ENCODE measurements at regions of chr6 and their contacts with region 1.

Region 1: DNA sequence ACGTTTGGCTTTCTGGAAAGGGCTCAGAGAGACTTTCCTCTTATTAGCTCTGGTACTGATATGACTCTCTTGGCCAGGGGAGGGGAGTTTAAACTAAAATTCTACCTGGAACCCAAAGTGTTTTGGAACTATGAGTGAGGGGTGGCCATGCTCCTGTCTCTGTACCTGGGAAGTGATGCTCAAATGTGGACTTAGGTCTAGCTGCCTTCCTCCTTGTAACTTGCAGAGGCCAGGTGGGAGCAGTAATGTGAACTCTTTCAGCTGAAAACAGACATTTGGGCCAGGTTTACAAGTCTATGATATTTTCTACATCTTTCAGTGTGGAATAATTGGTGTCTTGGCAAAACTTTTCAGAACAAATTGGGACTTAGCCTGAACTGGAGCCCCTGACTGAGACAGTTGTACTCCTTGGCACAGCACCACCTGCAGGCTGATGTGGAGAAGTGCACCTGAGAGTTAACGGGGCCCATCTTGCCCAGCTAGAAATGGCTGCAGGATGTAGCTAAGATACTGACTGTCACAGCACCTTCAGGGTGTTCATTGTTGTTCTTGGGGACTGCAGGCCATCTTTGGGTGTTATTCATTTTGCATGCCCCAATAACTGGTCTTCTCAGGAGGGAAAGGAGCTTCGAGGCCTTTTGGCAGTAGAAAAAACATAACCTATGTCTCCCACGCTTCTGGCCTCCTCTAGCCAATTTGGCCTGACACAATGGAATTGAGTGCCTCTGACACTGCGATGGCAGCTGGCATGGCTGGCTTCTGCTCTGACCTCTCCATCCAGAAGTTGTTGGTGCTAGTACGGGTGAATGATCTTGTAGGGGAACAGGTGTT is 37.1 kb downstream of the CD109 start:
- DNase-seq: peak; percentile 58 to 79 (median 73)
- H3K4me3 ChIP-seq: no peak overlapping the region
- H3K4me3 Mint-ChIP-seq: no peak overlapping the region
- H3K27ac ChIP-seq: peak overlapping the region in 1 of 2 donors; percentile 5
- H3K27ac Mint-ChIP-seq: peak overlapping the region in 1 of 7 donors; percentile 7
- H3K4me1 ChIP-seq: no peaks in the 10 kb centered on the region
- H3K4me1 Mint-ChIP-seq: peaks cover 4% of the 10 kb centered on the region
- H3K27me3 ChIP-seq: no peaks in the 10 kb centered on the region
- H3K27me3 Mint-ChIP-seq: no peaks in the 10 kb centered on the region
- CTCF ChIP-seq: peak; percentile 93

Region 2: GRCh38 chr6:73675466-73676098 is 57.5 kb before region 1 on chr6:
- intact Hi-C with region 1: loop called (anchors 5 kb)
- DNase-seq: peak; percentile 73 to 87 (median 80)
- H3K4me3 ChIP-seq: no peak overlapping the region
- H3K4me3 Mint-ChIP-seq: no peak overlapping the region
- H3K27ac ChIP-seq: no peak overlapping the region
- H3K27ac Mint-ChIP-seq: no peak overlapping the region
- H3K4me1 ChIP-seq: peaks cover 16 to 18% of the 10 kb centered on the region in 2 donors
- H3K4me1 Mint-ChIP-seq: peaks cover 24% of the 10 kb centered on the region
- H3K27me3 ChIP-seq: no peaks in the 10 kb centered on the region
- H3K27me3 Mint-ChIP-seq: peaks cover 0 to 3% (median 0%) of the 10 kb centered on the region in 3 donors
- CTCF ChIP-seq: peak; percentile 89

Region 3: GRCh38 chr6:73694711-73695411 is 38.2 kb before region 1 on chr6:
- intact Hi-C with region 1: loop called in 1 of 2 experiments (anchors 5 kb)
- DNase-seq: peak; percentile 19 to 78 (median 71)
- H3K4me3 ChIP-seq: peak overlapping the region in 1 of 3 experiments; percentile 83
- H3K4me3 Mint-ChIP-seq: peak overlapping the region; percentile 85 to 96
- H3K27ac ChIP-seq: peak overlapping the region in 1 of 2 donors; percentile 84
- H3K27ac Mint-ChIP-seq: peak overlapping the region in 6 of 7 donors; percentile 45 to 89 (median 82)
- H3K4me1 ChIP-seq: peaks cover 32% of the 10 kb centered on the region in 2 donors
- H3K4me1 Mint-ChIP-seq: peaks cover 41% of the 10 kb centered on the region
- H3K27me3 ChIP-seq: no peaks in the 10 kb centered on the region
- H3K27me3 Mint-ChIP-seq: peaks cover 2 to 7% (median 5%) of the 10 kb centered on the region in 3 donors
- CTCF ChIP-seq: no peak

Region 4: DNA sequence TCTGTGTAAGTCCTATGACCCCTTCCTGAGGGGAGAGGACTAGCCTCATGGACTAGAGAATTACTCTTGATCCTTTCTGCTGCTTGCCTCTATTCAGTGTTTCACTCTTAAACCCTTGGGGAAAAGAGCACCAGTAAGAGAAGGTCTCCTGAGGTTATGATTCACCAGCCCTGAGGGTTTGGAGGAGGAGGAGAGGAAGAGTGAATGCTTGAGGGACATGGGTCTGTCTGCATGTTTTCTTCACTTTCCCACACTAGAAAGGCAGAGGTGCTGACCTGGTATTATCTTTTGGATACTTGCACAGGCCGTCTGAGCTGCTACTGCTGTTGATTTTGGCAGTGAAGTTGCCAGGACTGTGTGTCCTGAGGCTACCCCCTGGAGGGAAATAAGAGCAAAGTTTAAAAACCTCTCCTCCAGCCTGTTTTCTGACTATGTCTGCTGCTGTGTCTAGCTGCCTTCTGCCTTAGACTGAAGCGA is 41.3 kb after region 1 on chr6:
- intact Hi-C with region 1: no loop called
- DNase-seq: no peak
- H3K4me3 ChIP-seq: no peak overlapping the region
- H3K4me3 Mint-ChIP-seq: no peak overlapping the region
- H3K27ac ChIP-seq: no peak overlapping the region
- H3K27ac Mint-ChIP-seq: peak overlapping the region in 1 of 7 donors; percentile 5
- H3K4me1 ChIP-seq: no peaks in the 10 kb centered on the region
- H3K4me1 Mint-ChIP-seq: no peaks in the 10 kb centered on the region
- H3K27me3 ChIP-seq: no peaks in the 10 kb centered on the region
- H3K27me3 Mint-ChIP-seq: peaks cover 0 to 1% (median 0%) of the 10 kb centered on the region in 3 donors
- CTCF ChIP-seq: no peak

Region 5: GRCh38 chr6:74280130-74280692 is 547.2 kb after region 1 on chr6:
- intact Hi-C with region 1: no loop called
- DNase-seq: no peak
- H3K4me3 ChIP-seq: no peak overlapping the region
- H3K4me3 Mint-ChIP-seq: no peak overlapping the region
- H3K27ac ChIP-seq: no peak overlapping the region
- H3K27ac Mint-ChIP-seq: no peak overlapping the region
- H3K4me1 ChIP-seq: no peaks in the 10 kb centered on the region
- H3K4me1 Mint-ChIP-seq: no peaks in the 10 kb centered on the region
- H3K27me3 ChIP-seq: no peaks in the 10 kb centered on the region
- H3K27me3 Mint-ChIP-seq: no peaks in the 10 kb centered on the region
- CTCF ChIP-seq: no peak

Measured in CD14-positive monocyte (primary cell).